ENCODE measurements at regions of chr16 and their contacts with region 1.

Region 1: GRCh38 chr16:47113130-47113529 is 30.6 kb downstream of the NETO2 start:
- DNase-seq: no peak
- ATAC-seq: no peak
- H3K4me3 ChIP-seq: no peak overlapping the region
- H3K27ac ChIP-seq: no peak overlapping the region
- H3K4me1 ChIP-seq: no peaks in the 10 kb centered on the region
- H3K27me3 ChIP-seq: peaks cover 0 to under 1% of the 10 kb centered on the region in 2 experiments; a peak in 1 of 5 replicates
- CTCF ChIP-seq: no peak
- EP300 ChIP-seq: no peak
- POLR2A ChIP-seq: no peak
- RAD21 ChIP-seq: no peak

Region 2: DNA sequence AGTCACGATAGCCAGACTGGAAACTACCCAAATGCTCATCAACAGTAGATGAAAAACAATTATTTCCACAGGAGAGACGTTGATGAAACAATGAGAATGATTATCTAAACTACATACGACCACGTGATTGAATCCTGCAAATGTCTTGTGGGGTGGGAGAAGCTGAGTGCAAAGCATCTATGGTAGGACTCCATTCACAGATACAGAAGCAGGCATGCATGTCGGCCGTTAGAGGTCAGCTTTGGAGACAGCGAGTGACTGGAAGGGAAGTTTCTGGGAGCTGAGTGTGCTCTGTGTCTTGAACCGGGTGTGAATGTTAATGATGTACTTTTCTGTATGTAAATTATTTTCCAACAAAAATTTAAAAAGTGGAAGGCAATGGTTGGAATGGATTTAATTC is 68.1 kb before region 1 on chr16:
- CTCF ChIA-PET with region 1: no interaction called
- POLR2A ChIA-PET with region 1: no interaction called
- in situ Hi-C with region 1: no loop called
- intact Hi-C with region 1: loop called (anchors 2 kb)
- DNase-seq: no peak
- ATAC-seq: peak; percentile 47; the same call in 2 of the 3 replicates
- H3K4me3 ChIP-seq: no peak overlapping the region
- H3K27ac ChIP-seq: no peak overlapping the region
- H3K4me1 ChIP-seq: peaks cover 38% of the 10 kb centered on the region
- H3K27me3 ChIP-seq: peaks cover 5 to 53% of the 10 kb centered on the region in 2 experiments; a peak in 4 of 5 replicates
- CTCF ChIP-seq: peak; percentile 52
- EP300 ChIP-seq: no peak
- POLR2A ChIP-seq: no peak
- RAD21 ChIP-seq: no peak

Region 3: DNA sequence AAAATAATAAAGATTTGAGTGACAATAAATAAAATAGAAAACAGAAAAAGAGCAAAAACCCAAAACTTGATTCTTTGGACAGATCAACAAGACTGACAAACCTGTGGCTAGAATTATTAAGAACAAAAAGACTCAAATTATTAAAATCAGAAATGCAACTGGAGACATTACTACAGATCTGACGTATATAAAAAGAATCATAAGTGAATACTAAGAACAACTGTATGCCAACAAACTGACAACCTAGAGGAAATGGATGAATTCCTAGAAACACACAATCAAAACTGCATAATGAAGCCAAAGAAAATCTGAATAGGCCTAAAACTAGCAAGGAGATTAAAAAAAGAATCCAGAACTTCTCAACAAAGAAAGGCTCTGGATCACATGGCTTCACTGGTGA is 16.8 kb before region 1 on chr16:
- CTCF ChIA-PET with region 1: no interaction called
- POLR2A ChIA-PET with region 1: no interaction called
- in situ Hi-C with region 1: no loop called
- intact Hi-C with region 1: no loop called
- DNase-seq: no peak
- ATAC-seq: no peak
- H3K4me3 ChIP-seq: no peak overlapping the region
- H3K27ac ChIP-seq: no peak overlapping the region
- H3K4me1 ChIP-seq: peaks cover 14% of the 10 kb centered on the region; the same call in 1 of the 2 replicates
- H3K27me3 ChIP-seq: no peaks in the 10 kb centered on the region; a peak in 1 of 5 replicates
- CTCF ChIP-seq: no peak
- EP300 ChIP-seq: no peak
- POLR2A ChIP-seq: no peak
- RAD21 ChIP-seq: no peak

Measured in HepG2 (cell line).